Activated CD4-positive, alpha-beta memory T cell treated with anti-CD3 and anti-CD28 coated beads for 36 hours (primary cell): ENCODE measurements at regions of chr6 and their contacts with region 1.

Region 1: GRCh38 chr6:52155791-52156576 is 30.2 kb upstream of the IL17A start:
- DNase-seq: peak; percentile 20
- H3K4me3 Mint-ChIP-seq: no peak overlapping the region
- H3K27ac Mint-ChIP-seq: peak overlapping the region; percentile 89
- H3K4me1 Mint-ChIP-seq: peaks cover 50% of the 10 kb centered on the region
- H3K27me3 Mint-ChIP-seq: peaks cover 20% of the 10 kb centered on the region

Region 2: DNA sequence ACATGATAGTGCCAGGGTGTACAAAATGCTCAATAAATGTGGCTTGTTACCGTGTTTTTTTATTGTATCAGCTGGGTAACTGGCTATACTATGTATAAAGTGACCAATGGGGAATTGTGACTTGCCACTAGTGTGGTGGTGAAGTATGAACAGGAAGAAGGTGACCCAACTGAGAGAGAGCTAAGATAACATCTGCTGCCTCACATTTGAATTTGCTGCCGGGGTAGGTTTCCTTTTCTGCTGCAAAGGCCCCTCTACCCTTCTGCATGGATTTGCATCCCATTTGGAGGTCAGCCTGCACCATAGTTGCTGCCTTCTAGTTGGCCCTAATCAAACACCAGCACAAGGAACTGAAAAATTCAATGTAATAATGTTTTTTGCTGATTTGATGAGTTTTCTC is 54.2 kb after region 1 on chr6:
- CTCF ChIA-PET with region 1: interaction called, 4 read pairs
- POLR2A ChIA-PET with region 1: no interaction called
- intact Hi-C with region 1: loop called (anchors 1 kb)
- DNase-seq: no peak
- H3K4me3 Mint-ChIP-seq: no peak overlapping the region
- H3K27ac Mint-ChIP-seq: no peak overlapping the region
- H3K4me1 Mint-ChIP-seq: peaks cover 16% of the 10 kb centered on the region
- H3K27me3 Mint-ChIP-seq: peaks cover 27% of the 10 kb centered on the region

Region 3: DNA sequence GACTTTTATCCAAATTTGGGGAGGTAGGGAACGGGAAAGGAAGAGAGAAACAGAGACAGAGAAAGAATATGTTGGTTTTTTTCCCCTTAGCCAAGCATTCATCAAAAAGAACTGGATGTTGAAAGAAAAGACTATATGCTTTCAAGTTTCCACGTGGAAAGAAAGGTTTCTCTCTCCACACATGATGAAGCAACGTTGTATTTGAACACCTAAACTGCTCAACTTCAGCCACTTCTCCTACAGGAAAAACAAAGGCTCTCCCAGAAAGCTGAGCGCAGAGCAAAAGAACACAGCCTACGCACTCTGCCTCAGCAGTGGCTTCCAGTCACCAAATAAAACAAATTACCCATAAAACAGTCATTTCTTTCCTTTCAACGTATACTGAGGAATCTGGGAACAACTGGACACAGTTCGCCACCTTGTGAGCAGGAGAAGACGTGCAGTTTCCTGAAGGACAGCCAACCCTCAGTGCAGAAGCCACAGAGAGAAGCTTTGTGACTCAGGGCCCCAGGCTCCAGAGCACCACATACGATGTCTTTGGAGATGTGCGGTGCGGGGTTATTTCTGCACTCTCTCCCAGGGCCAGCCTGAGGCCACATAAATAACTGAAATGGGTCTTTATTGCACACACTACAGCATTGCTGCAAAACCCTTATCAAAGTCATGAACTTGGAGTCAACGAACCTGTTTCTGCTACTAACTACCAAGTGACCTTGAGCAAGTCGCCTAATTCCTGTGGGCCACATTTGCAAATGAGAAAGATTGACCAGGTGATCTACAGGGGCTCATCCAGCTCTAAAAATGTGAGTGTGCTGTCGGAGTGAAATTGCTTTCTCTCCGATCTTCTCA is 78.2 kb after region 1 on chr6:
- CTCF ChIA-PET with region 1: interaction called, 4 read pairs
- POLR2A ChIA-PET with region 1: interaction called, 4 read pairs
- intact Hi-C with region 1: loop called (anchors 1 kb)
- DNase-seq: peak; percentile 73
- H3K4me3 Mint-ChIP-seq: no peak overlapping the region
- H3K27ac Mint-ChIP-seq: no peak overlapping the region
- H3K4me1 Mint-ChIP-seq: peaks cover 13% of the 10 kb centered on the region
- H3K27me3 Mint-ChIP-seq: peaks cover 39% of the 10 kb centered on the region

Region 4: DNA sequence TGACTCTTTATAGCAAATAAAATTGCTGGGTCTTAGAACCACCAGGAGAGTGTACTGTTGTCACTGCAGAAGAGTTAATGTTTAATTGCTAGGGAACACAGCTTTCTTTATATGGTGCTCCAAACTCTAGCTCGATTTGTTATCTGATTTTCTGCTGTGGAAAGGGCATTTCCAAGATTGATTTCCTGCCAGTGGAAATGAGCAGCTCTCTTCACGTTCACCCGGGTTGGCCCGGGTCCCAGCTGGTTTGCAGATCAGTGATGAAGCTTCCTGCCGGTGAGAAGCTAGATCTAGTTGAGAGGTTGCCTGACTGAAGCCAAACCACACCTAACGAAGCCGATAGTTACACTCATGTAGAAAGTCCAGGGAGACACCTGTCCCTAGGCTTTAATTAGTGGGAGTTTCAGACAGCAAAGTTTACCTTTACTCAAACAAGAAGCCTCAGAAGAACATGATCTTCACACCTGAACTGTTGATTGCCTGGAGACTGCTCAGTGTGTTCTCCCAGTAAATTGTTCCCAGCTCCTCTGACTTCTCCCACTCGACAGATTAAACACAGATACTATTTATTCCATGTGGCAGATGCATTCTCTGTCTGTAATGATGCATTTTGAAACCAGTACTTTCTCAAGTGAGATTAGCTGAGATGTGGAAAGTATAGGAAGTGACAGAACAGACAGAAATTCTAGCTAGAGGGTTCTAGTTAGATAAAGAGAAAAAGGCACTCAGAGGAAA is 233.8 kb after region 1 on chr6:
- CTCF ChIA-PET with region 1: interaction called, 6 read pairs
- POLR2A ChIA-PET with region 1: no interaction called
- intact Hi-C with region 1: loop called (anchors 1 kb)
- DNase-seq: peak; percentile 74
- H3K4me3 Mint-ChIP-seq: peak overlapping the region; percentile 47
- H3K27ac Mint-ChIP-seq: peak overlapping the region; percentile 76
- H3K4me1 Mint-ChIP-seq: peaks cover 82% of the 10 kb centered on the region
- H3K27me3 Mint-ChIP-seq: no peaks in the 10 kb centered on the region

Region 5: DNA sequence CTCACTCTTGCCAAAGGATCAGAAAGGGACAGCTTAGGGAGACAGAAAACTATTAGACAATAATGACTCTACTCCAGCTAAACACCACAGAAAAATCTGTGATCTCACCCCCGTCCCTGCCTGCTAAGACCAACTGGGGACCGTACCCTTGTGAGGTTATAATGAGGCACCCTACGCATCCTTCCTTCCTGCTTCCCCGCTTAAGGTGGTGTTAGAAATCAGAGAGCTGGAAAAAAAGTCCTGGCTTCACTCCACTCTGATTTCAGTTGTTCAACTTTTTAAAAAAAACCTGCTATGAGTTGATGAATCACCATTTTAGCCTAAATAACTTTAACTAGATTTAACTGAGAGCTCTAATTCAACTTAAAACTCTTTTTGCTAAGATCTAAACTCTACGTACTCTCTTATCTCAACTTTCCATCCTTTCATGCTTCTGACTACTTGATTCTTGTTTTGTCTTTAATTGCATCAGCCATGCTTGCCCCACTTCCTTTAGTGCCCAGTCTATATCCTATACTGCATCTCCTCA is 479.1 kb after region 1 on chr6:
- CTCF ChIA-PET with region 1: no interaction called
- POLR2A ChIA-PET with region 1: no interaction called
- intact Hi-C with region 1: loop called (anchors 1 kb)
- DNase-seq: peak; percentile 62
- H3K4me3 Mint-ChIP-seq: peak overlapping the region; percentile 2
- H3K27ac Mint-ChIP-seq: peak overlapping the region; percentile 75
- H3K4me1 Mint-ChIP-seq: peaks cover 18% of the 10 kb centered on the region
- H3K27me3 Mint-ChIP-seq: peaks cover 5% of the 10 kb centered on the region